T-cell (primary cell): ENCODE measurements at regions of chr18 and their contacts with region 1.

Region 1: GRCh38 chr18:74353169-74353775 is 37.6 kb downstream of the C18orf63 start:
- DNase-seq: peak in 34 of 35 experiments; percentile 30 to 84 (median 56)
- ATAC-seq: peak; percentile 79 to 89 (median 82)
- H3K4me3 ChIP-seq: no peak overlapping the region
- H3K4me3 Mint-ChIP-seq: no peak overlapping the region
- H3K27ac ChIP-seq: no peak overlapping the region
- H3K27ac Mint-ChIP-seq: no peak overlapping the region
- H3K4me1 ChIP-seq: peaks cover 0 to 3% of the 10 kb centered on the region in 2 experiments
- H3K4me1 Mint-ChIP-seq: peaks cover 13 to 14% (median 14%) of the 10 kb centered on the region in 3 donors
- H3K27me3 ChIP-seq: no peaks in the 10 kb centered on the region
- H3K27me3 Mint-ChIP-seq: no peaks in the 10 kb centered on the region

Region 2: DNA sequence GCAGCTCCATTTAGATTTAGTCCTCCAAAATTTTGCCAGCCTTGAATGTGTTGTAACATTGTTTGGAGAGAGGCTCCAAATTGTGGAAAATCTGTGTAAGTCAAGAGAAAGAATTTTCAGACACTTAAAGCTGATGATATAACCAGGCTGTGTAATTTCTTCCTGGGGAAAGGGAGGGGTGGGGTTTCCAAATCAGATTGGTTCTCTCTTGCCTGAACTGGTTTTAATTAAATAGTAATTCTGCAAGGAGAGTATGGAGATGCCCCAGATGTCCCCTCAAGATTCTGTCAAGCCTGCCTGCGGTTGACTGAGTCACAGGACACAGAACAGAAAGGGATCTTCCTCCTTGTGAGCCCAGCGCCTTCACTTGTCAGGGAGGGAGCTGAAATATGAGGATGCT is 16.8 kb after region 1 on chr18:
- CTCF ChIA-PET with region 1: interaction called, 5 to 25 read pairs
- POLR2A ChIA-PET with region 1: interaction called in 1 of 2 experiments, 9 read pairs
- DNase-seq: no peak
- ATAC-seq: no peak
- H3K4me3 ChIP-seq: no peak overlapping the region
- H3K4me3 Mint-ChIP-seq: peak overlapping the region in 1 of 3 donors; percentile 10
- H3K27ac ChIP-seq: no peak overlapping the region
- H3K27ac Mint-ChIP-seq: no peak overlapping the region
- H3K4me1 ChIP-seq: peaks cover 38% of the 10 kb centered on the region in 2 experiments
- H3K4me1 Mint-ChIP-seq: peaks cover 48 to 52% (median 50%) of the 10 kb centered on the region in 3 donors
- H3K27me3 ChIP-seq: no peaks in the 10 kb centered on the region
- H3K27me3 Mint-ChIP-seq: peaks cover 0 to 8% of the 10 kb centered on the region in 2 donors

Region 3: GRCh38 chr18:74378179-74378682 is 25.0 kb after region 1 on chr18:
- CTCF ChIA-PET with region 1: interaction called, 14 to 25 read pairs
- POLR2A ChIA-PET with region 1: interaction called in 1 of 2 experiments, 9 read pairs
- DNase-seq: peak in 29 of 35 experiments; percentile 8 to 74 (median 32)
- ATAC-seq: peak; percentile 38 to 71 (median 50)
- H3K4me3 ChIP-seq: peak overlapping the region in 1 of 2 donors; percentile 25
- H3K4me3 Mint-ChIP-seq: peak overlapping the region; percentile 21 to 71 (median 58)
- H3K27ac ChIP-seq: peak overlapping the region; percentile 43
- H3K27ac Mint-ChIP-seq: peak overlapping the region; percentile 92
- H3K4me1 ChIP-seq: peaks cover 41 to 44% of the 10 kb centered on the region in 2 experiments
- H3K4me1 Mint-ChIP-seq: peaks cover 56 to 63% (median 61%) of the 10 kb centered on the region in 3 donors
- H3K27me3 ChIP-seq: peaks cover 0 to 7% of the 10 kb centered on the region in 2 experiments
- H3K27me3 Mint-ChIP-seq: no peaks in the 10 kb centered on the region

Region 4: GRCh38 chr18:75334869-75335268 is 981.6 kb after region 1 on chr18:
- CTCF ChIA-PET with region 1: interaction called in 1 of 2 experiments, 12 read pairs
- POLR2A ChIA-PET with region 1: no interaction called
- DNase-seq: no peak
- ATAC-seq: no peak
- H3K4me3 ChIP-seq: no peak overlapping the region
- H3K4me3 Mint-ChIP-seq: no peak overlapping the region
- H3K27ac ChIP-seq: no peak overlapping the region
- H3K27ac Mint-ChIP-seq: no peak overlapping the region
- H3K4me1 ChIP-seq: no peaks in the 10 kb centered on the region
- H3K4me1 Mint-ChIP-seq: no peaks in the 10 kb centered on the region
- H3K27me3 ChIP-seq: no peaks in the 10 kb centered on the region
- H3K27me3 Mint-ChIP-seq: no peaks in the 10 kb centered on the region